CD4-positive, alpha-beta memory T cell (primary cell): ENCODE measurements at regions of chr12 and their contacts with region 1.

Region 1: GRCh38 chr12:39443081-39443928 is at the start of gene KIF21A:
- DNase-seq: peak; percentile 90 to 93 (median 93)
- H3K4me3 ChIP-seq: peak within 1 kb of the TSS; percentile 50 to 83
- H3K4me3 Mint-ChIP-seq: peak within 1 kb of the TSS; percentile 94 to 98 (median 95)
- H3K27ac ChIP-seq: peak within 1 kb of the TSS; percentile 66
- H3K27ac Mint-ChIP-seq: peak within 1 kb of the TSS; percentile 90 to 99 (median 97)
- H3K4me1 ChIP-seq: peaks cover 13% of the 10 kb centered on the region
- H3K4me1 Mint-ChIP-seq: peaks cover 15 to 33% (median 23%) of the 10 kb centered on the region in 4 donors
- H3K27me3 ChIP-seq: no peaks in the 10 kb centered on the region
- H3K27me3 Mint-ChIP-seq: no peaks in the 10 kb centered on the region
- total RNA-seq, gene KIF21A: 19.1 to 19.9 TPM

Region 2: GRCh38 chr12:38316391-38317129 is 1126.7 kb before region 1 on chr12 and contains the start of gene ALG10B:
- CTCF ChIA-PET with region 1: no interaction called
- POLR2A ChIA-PET with region 1: no interaction called
- intact Hi-C with region 1: loop called (anchors 2 kb)
- DNase-seq: peak; percentile 92 to 95 (median 94)
- H3K4me3 ChIP-seq: peak within 1 kb of the TSS; percentile 73 to 90
- H3K4me3 Mint-ChIP-seq: peak within 1 kb of the TSS; percentile 93 to 97 (median 94)
- H3K27ac ChIP-seq: peak within 1 kb of the TSS; percentile 79
- H3K27ac Mint-ChIP-seq: peak within 1 kb of the TSS; percentile 97 to 99 (median 98)
- H3K4me1 ChIP-seq: peaks cover 16% of the 10 kb centered on the region
- H3K4me1 Mint-ChIP-seq: peaks cover 19 to 34% (median 27%) of the 10 kb centered on the region in 4 donors
- H3K27me3 ChIP-seq: no peaks in the 10 kb centered on the region
- H3K27me3 Mint-ChIP-seq: no peaks in the 10 kb centered on the region
- total RNA-seq, gene ALG10B: 12.1 to 12.5 TPM

Region 3: GRCh38 chr12:39319187-39319586 is 124.1 kb before region 1 on chr12:
- CTCF ChIA-PET with region 1: interaction called, 5 read pairs
- POLR2A ChIA-PET with region 1: interaction called, 5 read pairs
- intact Hi-C with region 1: loop called (anchors 5 kb)
- DNase-seq: peak in 1 of 5 donors; percentile 14
- H3K4me3 ChIP-seq: no peak overlapping the region
- H3K4me3 Mint-ChIP-seq: no peak overlapping the region
- H3K27ac ChIP-seq: no peak overlapping the region
- H3K27ac Mint-ChIP-seq: peak overlapping the region in 1 of 7 donors; percentile 47
- H3K4me1 ChIP-seq: no peaks in the 10 kb centered on the region
- H3K4me1 Mint-ChIP-seq: peaks cover 0 to 2% (median 0%) of the 10 kb centered on the region in 4 donors
- H3K27me3 ChIP-seq: no peaks in the 10 kb centered on the region
- H3K27me3 Mint-ChIP-seq: no peaks in the 10 kb centered on the region

Region 4: GRCh38 chr12:39372929-39373328 is 70.4 kb before region 1 on chr12:
- CTCF ChIA-PET with region 1: interaction called, 7 read pairs
- POLR2A ChIA-PET with region 1: interaction called, 7 read pairs
- intact Hi-C with region 1: loop called (anchors 5 kb)
- DNase-seq: peak in 4 of 5 donors; percentile 4 to 11 (median 8)
- H3K4me3 ChIP-seq: no peak overlapping the region
- H3K4me3 Mint-ChIP-seq: peak overlapping the region; percentile 5 to 73 (median 32)
- H3K27ac ChIP-seq: no peak overlapping the region
- H3K27ac Mint-ChIP-seq: peak overlapping the region in 5 of 7 donors; percentile 0 to 48 (median 20)
- H3K4me1 ChIP-seq: peaks cover 14% of the 10 kb centered on the region
- H3K4me1 Mint-ChIP-seq: peaks cover 14 to 29% (median 18%) of the 10 kb centered on the region in 4 donors
- H3K27me3 ChIP-seq: no peaks in the 10 kb centered on the region
- H3K27me3 Mint-ChIP-seq: no peaks in the 10 kb centered on the region

Region 5: DNA sequence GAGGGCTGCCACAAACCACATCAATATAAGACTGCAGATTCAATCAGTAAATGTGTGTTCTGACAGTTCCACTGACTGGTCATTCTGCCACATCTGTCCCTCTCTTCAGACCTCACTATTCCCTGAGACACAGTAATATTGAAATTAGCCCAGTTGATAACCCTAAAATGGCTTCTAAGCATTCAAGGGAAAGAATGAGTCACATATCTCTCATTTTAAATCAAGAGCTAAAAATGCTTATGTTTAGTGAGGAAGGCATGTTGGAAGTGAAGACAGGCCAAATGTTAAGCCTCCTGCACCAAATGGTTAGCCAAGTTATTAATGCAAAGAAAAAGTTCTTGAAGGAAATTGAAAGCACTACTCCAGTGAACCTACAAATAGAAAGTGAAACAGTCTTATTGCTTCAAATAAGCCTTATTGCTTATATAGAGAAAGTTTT is 24.1 kb after region 1 on chr12:
- CTCF ChIA-PET with region 1: interaction called, 8 read pairs
- POLR2A ChIA-PET with region 1: no interaction called
- intact Hi-C with region 1: loop called (anchors 2 kb)
- DNase-seq: peak in 4 of 5 donors; percentile 24 to 36 (median 26)
- H3K4me3 ChIP-seq: peak overlapping the region in 1 of 2 donors; percentile 3
- H3K4me3 Mint-ChIP-seq: peak overlapping the region; percentile 67 to 82 (median 78)
- H3K27ac ChIP-seq: peak overlapping the region; percentile 38
- H3K27ac Mint-ChIP-seq: peak overlapping the region; percentile 33 to 83 (median 65)
- H3K4me1 ChIP-seq: peaks cover 18% of the 10 kb centered on the region
- H3K4me1 Mint-ChIP-seq: peaks cover 14 to 24% (median 17%) of the 10 kb centered on the region in 4 donors
- H3K27me3 ChIP-seq: no peaks in the 10 kb centered on the region
- H3K27me3 Mint-ChIP-seq: no peaks in the 10 kb centered on the region

Region 6: DNA sequence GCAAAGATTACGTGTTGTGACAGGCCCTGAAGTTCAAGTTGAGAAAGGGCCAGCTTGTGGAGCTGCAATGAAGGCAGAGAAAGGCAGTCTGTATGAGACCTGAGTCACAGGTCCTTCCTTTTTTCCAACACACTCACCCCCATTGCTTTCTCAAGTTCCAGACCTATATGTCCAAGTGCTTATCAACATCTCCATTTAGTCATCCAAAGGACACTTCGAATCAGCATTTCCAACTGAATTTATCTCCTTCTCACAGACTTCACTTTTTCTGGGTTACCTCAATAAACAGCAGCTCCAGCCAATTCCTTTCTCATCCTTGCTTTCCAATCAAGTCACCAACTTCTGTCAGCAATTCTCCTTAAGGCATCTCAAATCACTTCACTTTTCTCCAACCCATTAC is 56.0 kb after region 1 on chr12:
- CTCF ChIA-PET with region 1: no interaction called
- POLR2A ChIA-PET with region 1: no interaction called
- intact Hi-C with region 1: no loop called
- DNase-seq: no peak
- H3K4me3 ChIP-seq: no peak overlapping the region
- H3K4me3 Mint-ChIP-seq: no peak overlapping the region
- H3K27ac ChIP-seq: no peak overlapping the region
- H3K27ac Mint-ChIP-seq: no peak overlapping the region
- H3K4me1 ChIP-seq: no peaks in the 10 kb centered on the region
- H3K4me1 Mint-ChIP-seq: no peaks in the 10 kb centered on the region
- H3K27me3 ChIP-seq: no peaks in the 10 kb centered on the region
- H3K27me3 Mint-ChIP-seq: no peaks in the 10 kb centered on the region

Region 7: DNA sequence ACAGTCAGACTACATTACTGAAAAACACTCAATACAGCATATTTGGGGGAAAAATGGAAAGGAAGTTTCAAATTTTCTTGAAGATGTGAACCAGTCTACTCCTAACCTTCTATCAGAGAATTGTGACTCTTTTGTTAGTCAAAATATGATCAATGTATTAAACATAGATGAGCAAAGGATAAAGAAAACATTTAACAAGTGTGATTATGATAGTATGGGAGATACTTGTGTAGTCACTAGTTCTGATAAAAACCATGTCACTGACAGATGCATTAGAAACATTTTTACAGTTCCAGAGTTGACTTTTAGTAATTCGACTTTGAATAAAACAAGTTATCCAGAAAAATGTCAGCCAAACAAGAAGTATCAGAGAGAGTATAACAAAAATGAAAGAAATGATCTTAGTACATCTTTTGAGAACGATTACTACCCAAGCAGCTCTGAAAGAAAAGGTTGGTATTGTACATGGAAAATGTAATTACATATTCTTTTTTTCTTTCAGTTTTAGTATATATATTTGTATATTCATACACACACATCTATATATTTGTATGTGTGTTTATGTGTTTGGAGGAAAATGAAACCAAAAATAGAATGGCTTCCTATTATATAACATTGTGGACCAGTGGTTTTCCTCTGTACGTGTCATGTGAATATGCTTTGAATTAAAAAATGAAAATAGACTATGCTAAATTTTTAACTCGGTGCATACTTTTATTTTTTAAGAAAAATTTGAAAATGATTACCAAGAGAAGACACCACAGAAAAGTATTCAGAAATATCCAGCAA is 239.6 kb after region 1 on chr12:
- CTCF ChIA-PET with region 1: interaction called, 4 read pairs
- POLR2A ChIA-PET with region 1: interaction called, 8 read pairs
- intact Hi-C with region 1: loop called (anchors 5 kb)
- DNase-seq: peak in 4 of 5 donors; percentile 57 to 73 (median 64)
- H3K4me3 ChIP-seq: peak overlapping the region; percentile 1 to 37
- H3K4me3 Mint-ChIP-seq: peak overlapping the region; percentile 78 to 92 (median 88)
- H3K27ac ChIP-seq: peak overlapping the region; percentile 80
- H3K27ac Mint-ChIP-seq: peak overlapping the region; percentile 86 to 100 (median 98)
- H3K4me1 ChIP-seq: peaks cover 43% of the 10 kb centered on the region
- H3K4me1 Mint-ChIP-seq: peaks cover 30 to 43% (median 37%) of the 10 kb centered on the region in 4 donors
- H3K27me3 ChIP-seq: no peaks in the 10 kb centered on the region
- H3K27me3 Mint-ChIP-seq: no peaks in the 10 kb centered on the region